Activated CD4-positive, alpha-beta memory T cell treated with anti-CD3 and anti-CD28 coated beads, Interleukin-2, amount 10 ng/mL, durations not matched to agents 7 days and 5 days (primary cell): ENCODE measurements at regions of chr2 and their contacts with region 1.

Region 1: DNA sequence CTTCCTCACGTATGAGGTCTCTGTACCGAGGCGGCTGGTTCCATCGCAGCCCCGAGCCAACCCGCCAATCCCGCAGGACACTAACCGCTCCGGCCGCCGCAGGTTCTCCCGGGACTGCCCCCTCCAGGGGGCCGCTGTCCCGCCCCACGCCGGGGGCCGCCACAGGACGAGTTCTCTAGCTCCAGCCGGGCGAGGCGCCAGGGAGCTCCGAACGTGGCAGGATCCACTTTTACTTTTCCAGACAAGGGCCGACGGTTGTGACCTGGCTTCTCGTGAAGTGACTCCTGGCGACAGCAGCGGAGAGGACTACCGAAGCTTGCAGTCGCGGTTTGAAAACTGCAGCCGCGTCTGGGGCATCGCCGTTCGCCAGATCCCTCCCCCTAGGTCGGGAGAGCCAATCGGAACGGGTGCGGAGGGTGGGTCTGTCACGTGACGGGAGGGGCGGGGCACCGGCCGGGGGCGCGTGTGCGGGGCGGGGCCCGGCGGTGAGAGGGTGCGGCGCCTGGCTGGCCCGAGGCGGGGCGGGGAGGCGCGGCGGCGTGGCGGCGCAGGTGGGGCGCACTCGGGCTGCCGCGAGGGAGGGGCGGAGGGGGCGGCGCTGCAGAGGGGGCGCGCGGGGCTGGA is at the start of gene STK17B:
- DNase-seq: peak; percentile 98
- H3K4me3 Mint-ChIP-seq: peak within 1 kb of the TSS; percentile 94
- H3K27ac Mint-ChIP-seq: peak within 1 kb of the TSS; percentile 97
- H3K4me1 Mint-ChIP-seq: peaks cover 39% of the 10 kb centered on the region
- H3K27me3 Mint-ChIP-seq: no peaks in the 10 kb centered on the region
- total RNA-seq, gene STK17B: 365 to 367 TPM

Region 2: DNA sequence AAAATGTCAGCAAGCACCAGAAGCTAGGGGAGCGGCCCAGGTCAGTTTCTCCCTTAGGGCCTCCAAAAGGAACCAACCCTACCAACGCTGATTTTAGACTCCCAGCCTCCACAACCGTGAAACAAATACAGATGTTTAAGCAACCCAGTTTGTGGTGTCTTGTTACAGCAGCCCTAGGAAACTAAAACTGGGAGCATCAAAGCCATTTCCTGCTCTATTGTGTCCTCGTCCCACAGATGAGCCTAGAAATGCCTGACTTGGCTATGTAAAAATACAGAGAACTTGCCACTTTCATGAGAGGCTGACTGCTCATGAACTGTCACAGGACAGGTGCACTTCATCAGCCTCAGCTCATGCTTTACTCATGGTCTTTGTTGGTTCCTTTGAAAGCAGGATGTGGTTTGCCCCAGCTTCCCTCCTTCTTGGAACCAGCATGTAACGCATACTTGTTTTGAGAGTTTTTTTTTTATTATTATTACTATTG is 611.9 kb before region 1 on chr2:
- CTCF ChIA-PET with region 1: no interaction called
- POLR2A ChIA-PET with region 1: interaction called, 16 read pairs
- DNase-seq: peak; percentile 91
- H3K4me3 Mint-ChIP-seq: peak overlapping the region; percentile 74
- H3K27ac Mint-ChIP-seq: peak overlapping the region; percentile 99
- H3K4me1 Mint-ChIP-seq: peaks cover 71% of the 10 kb centered on the region
- H3K27me3 Mint-ChIP-seq: no peaks in the 10 kb centered on the region

Region 3: GRCh38 chr2:196187898-196188458 is 16.6 kb after region 1 on chr2:
- CTCF ChIA-PET with region 1: interaction called, 6 read pairs
- POLR2A ChIA-PET with region 1: interaction called, 124 read pairs
- DNase-seq: no peak
- H3K4me3 Mint-ChIP-seq: no peak overlapping the region
- H3K27ac Mint-ChIP-seq: no peak overlapping the region
- H3K4me1 Mint-ChIP-seq: peaks cover 53% of the 10 kb centered on the region
- H3K27me3 Mint-ChIP-seq: no peaks in the 10 kb centered on the region

Region 4: GRCh38 chr2:196205881-196206435 is 34.6 kb after region 1 on chr2:
- CTCF ChIA-PET with region 1: interaction called, 6 read pairs
- POLR2A ChIA-PET with region 1: interaction called, 88 read pairs
- DNase-seq: no peak
- H3K4me3 Mint-ChIP-seq: no peak overlapping the region
- H3K27ac Mint-ChIP-seq: no peak overlapping the region
- H3K4me1 Mint-ChIP-seq: peaks cover 41% of the 10 kb centered on the region
- H3K27me3 Mint-ChIP-seq: no peaks in the 10 kb centered on the region

Region 5: GRCh38 chr2:196249860-196250259 is 78.5 kb after region 1 on chr2:
- CTCF ChIA-PET with region 1: no interaction called
- POLR2A ChIA-PET with region 1: interaction called, 102 read pairs
- DNase-seq: no peak
- H3K4me3 Mint-ChIP-seq: no peak overlapping the region
- H3K27ac Mint-ChIP-seq: no peak overlapping the region
- H3K4me1 Mint-ChIP-seq: peaks cover 62% of the 10 kb centered on the region
- H3K27me3 Mint-ChIP-seq: no peaks in the 10 kb centered on the region

Region 6: DNA sequence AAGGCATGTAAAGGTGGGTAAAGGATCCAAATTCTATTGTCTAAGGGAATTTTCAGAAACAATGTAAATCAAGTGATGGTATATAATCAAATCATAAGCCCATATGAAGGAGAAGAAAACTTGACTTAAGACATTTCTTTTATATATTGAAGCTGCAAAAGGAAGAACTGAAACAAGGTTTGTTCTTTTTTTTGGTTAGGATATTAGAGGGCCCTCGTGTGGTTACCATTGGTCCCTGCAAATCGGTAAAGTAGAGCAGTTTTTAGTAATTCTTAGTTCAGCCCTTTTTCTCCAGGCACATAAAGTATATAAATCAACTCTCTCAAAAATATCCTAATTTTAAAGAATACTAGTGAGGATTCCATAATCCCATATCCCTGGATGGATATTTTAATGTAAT is 105.6 kb after region 1 on chr2:
- CTCF ChIA-PET with region 1: interaction called, 55 read pairs
- POLR2A ChIA-PET with region 1: interaction called, 56 read pairs
- DNase-seq: peak; percentile 42
- H3K4me3 Mint-ChIP-seq: peak overlapping the region; percentile 27
- H3K27ac Mint-ChIP-seq: no peak overlapping the region
- H3K4me1 Mint-ChIP-seq: peaks cover 55% of the 10 kb centered on the region
- H3K27me3 Mint-ChIP-seq: no peaks in the 10 kb centered on the region